Caco-2 (cell line): ENCODE measurements at regions of chr4 and their contacts with region 1.

Region 1: GRCh38 chr4:66974665-66975064 is 570.6 kb downstream of the CENPC start:
- DNase-seq: peak in 1 of 2 experiments; percentile 5
- H3K4me3 ChIP-seq: no peak overlapping the region
- H3K4me3 Mint-ChIP-seq: no peak overlapping the region
- H3K27ac Mint-ChIP-seq: no peak overlapping the region
- H3K4me1 ChIP-seq: peaks cover 13% of the 10 kb centered on the region
- H3K4me1 Mint-ChIP-seq: no peaks in the 10 kb centered on the region
- H3K27me3 ChIP-seq: no peaks in the 10 kb centered on the region
- H3K27me3 Mint-ChIP-seq: no peaks in the 10 kb centered on the region
- CTCF ChIP-seq: no peak

Region 2: GRCh38 chr4:66791686-66792085 is 183.0 kb before region 1 on chr4:
- CTCF ChIA-PET with region 1: no interaction called
- POLR2A ChIA-PET with region 1: no interaction called
- intact Hi-C with region 1: no loop called
- DNase-seq: no peak
- H3K4me3 ChIP-seq: no peak overlapping the region
- H3K4me3 Mint-ChIP-seq: no peak overlapping the region
- H3K27ac Mint-ChIP-seq: no peak overlapping the region
- H3K4me1 ChIP-seq: no peaks in the 10 kb centered on the region
- H3K4me1 Mint-ChIP-seq: no peaks in the 10 kb centered on the region
- H3K27me3 ChIP-seq: no peaks in the 10 kb centered on the region
- H3K27me3 Mint-ChIP-seq: no peaks in the 10 kb centered on the region
- CTCF ChIP-seq: no peak

Region 3: DNA sequence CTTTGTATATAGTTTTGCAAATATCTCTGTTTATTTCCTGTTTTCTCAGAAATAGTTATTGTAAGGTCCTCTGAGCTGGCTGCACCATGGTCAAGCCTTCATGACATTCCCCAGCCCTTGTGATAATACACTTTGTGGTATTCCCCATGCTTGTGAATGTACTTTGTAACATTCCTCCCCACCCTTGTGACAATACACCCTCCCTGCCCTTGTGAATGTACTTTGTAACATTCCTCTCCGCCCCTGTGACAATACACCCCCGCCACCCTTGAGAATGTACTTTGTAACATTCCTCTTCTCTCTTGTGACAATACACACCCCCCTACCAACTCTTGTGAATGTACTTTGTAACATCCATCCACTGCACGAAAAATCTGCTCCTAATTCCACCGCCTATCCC is 39.9 kb after region 1 on chr4:
- CTCF ChIA-PET with region 1: no interaction called
- POLR2A ChIA-PET with region 1: no interaction called
- intact Hi-C with region 1: loop called (anchors 1 kb)
- DNase-seq: peak; percentile 81 to 86
- H3K4me3 ChIP-seq: no peak overlapping the region
- H3K4me3 Mint-ChIP-seq: no peak overlapping the region
- H3K27ac Mint-ChIP-seq: peak overlapping the region; percentile 62
- H3K4me1 ChIP-seq: peaks cover 31% of the 10 kb centered on the region
- H3K4me1 Mint-ChIP-seq: peaks cover 18% of the 10 kb centered on the region
- H3K27me3 ChIP-seq: no peaks in the 10 kb centered on the region
- H3K27me3 Mint-ChIP-seq: no peaks in the 10 kb centered on the region
- CTCF ChIP-seq: no peak